ENCODE measurements at regions of chrX and their contacts with region 1.

Region 1: DNA sequence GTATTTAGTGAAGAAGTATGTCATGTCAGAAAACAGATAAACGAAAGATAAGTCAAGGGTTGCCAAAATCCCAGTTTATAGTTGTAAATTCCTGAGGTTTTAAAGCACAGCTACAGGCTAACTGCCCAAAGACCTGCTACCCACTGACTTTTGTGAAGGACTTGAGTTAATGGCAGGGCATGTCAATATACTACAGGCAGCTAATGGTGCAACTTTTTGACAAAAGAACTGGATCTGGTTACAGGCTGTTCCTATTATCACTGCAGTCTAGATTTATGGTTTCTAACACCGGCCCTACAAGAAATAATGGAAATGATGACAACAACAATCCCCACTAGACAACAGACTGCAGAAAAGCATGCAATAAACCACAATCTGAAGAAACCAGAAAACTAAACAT is 6.4 kb downstream of the SCML2 start:
- DNase-seq: no peak
- ATAC-seq: no peak
- H3K4me3 ChIP-seq: no peak overlapping the region
- H3K27ac ChIP-seq: peak overlapping the region; percentile 58
- H3K4me1 ChIP-seq: peaks cover 46% of the 10 kb centered on the region
- H3K27me3 ChIP-seq: no peaks in the 10 kb centered on the region
- CTCF ChIP-seq: no peak
- EP300 ChIP-seq: no peak
- POLR2A ChIP-seq: no peak
- RAD21 ChIP-seq: no peak

Region 2: DNA sequence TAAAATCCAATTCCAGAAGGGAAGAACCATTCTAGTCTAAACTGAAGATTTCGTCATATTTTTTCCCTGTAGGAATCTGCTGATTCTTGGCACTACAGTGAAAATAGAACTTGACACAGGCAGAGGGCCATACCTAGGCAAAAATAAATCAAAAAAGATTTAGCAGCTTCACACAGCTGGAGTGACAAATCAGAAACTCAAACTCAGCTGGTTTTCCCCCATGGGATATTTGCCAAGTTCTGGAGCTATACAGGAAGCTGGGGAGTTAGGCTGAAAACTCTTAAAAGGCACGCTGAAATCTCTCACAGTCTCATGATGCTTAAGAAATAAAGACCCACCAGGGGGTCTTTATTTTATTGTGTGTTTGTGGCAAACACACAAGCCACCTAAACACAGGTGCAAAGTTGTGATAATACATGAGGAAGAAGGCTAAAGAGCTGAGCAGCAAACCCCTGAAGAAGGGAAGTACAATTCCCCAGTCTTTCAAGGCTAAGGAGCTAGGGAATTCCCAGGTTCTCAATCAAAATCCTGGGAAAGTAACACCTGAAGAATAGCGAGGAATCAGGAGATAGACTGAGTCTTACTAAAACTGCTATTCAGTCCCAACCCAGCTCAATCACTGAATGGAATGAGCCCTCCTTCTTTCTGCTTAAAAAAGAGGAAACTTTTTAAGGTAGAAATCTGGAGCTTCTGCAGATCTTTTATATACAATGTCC is 95.2 kb before region 1 on chrX:
- CTCF ChIA-PET with region 1: no interaction called
- POLR2A ChIA-PET with region 1: no interaction called
- in situ Hi-C with region 1: no loop called
- intact Hi-C with region 1: no loop called
- DNase-seq: no peak
- ATAC-seq: no peak
- H3K4me3 ChIP-seq: no peak overlapping the region
- H3K27ac ChIP-seq: no peak overlapping the region
- H3K4me1 ChIP-seq: no peaks in the 10 kb centered on the region
- H3K27me3 ChIP-seq: no peaks in the 10 kb centered on the region
- CTCF ChIP-seq: no peak
- EP300 ChIP-seq: no peak
- POLR2A ChIP-seq: no peak
- RAD21 ChIP-seq: no peak

Region 3: GRCh38 chrX:18288716-18289115 is 59.3 kb before region 1 on chrX:
- CTCF ChIA-PET with region 1: no interaction called
- POLR2A ChIA-PET with region 1: no interaction called
- in situ Hi-C with region 1: no loop called
- intact Hi-C with region 1: loop called (anchors 10 kb)
- DNase-seq: no peak
- ATAC-seq: no peak
- H3K4me3 ChIP-seq: no peak overlapping the region
- H3K27ac ChIP-seq: no peak overlapping the region
- H3K4me1 ChIP-seq: peaks cover 8% of the 10 kb centered on the region; the same call in 1 of the 2 replicates
- H3K27me3 ChIP-seq: no peaks in the 10 kb centered on the region
- CTCF ChIP-seq: no peak
- EP300 ChIP-seq: no peak
- POLR2A ChIP-seq: no peak
- RAD21 ChIP-seq: no peak